H1 (cell line): ENCODE measurements at regions of chr3 and their contacts with region 1.

Region 1: GRCh38 chr3:49411968-49412631 is at the starts of genes RHOA and TCTA:
- DNase-seq: peak; percentile 93 to 95
- H3K4me3 ChIP-seq: peak within 1 kb of the TSS; percentile 76 to 99 (median 90)
- H3K27ac ChIP-seq: peak within 1 kb of the TSS; percentile 86
- H3K4me1 ChIP-seq: peaks cover 3 to 11% (median 8%) of the 10 kb centered on the region in 4 experiments; a peak in 6 of 7 replicates
- H3K27me3 ChIP-seq: no peaks in the 10 kb centered on the region
- CTCF ChIP-seq: 0 out of 4 replicates have a peak, but pooled peaks of 1 of the 3 experiments have one; percentile 8
- EP300 ChIP-seq: no peak
- POLR2A ChIP-seq: peak; percentile 95 to 99
- RAD21 ChIP-seq: no peak; a peak in 1 of 4 replicates
- total RNA-seq, gene RHOA: 386 and 397 TPM in 2 replicates
- total RNA-seq, gene TCTA: 6.2 and 7.4 TPM in 2 replicates

Region 2: GRCh38 chr3:49339945-49340800 is 71.9 kb before region 1 on chr3 and contains the start of gene USP4:
- CTCF ChIA-PET with region 1: interaction called, 6 read pairs
- POLR2A ChIA-PET with region 1: interaction called, 10 read pairs
- DNase-seq: peak; percentile 43 to 81
- H3K4me3 ChIP-seq: peak within 1 kb of the TSS; percentile 59 to 75 (median 74)
- H3K27ac ChIP-seq: peak within 1 kb of the TSS; percentile 70; the same call in 1 of the 2 replicates
- H3K4me1 ChIP-seq: peaks cover 0 to 11% (median 5%) of the 10 kb centered on the region in 4 experiments; a peak in 4 of 7 replicates
- H3K27me3 ChIP-seq: no peaks in the 10 kb centered on the region; a peak in 1 of 7 replicates
- CTCF ChIP-seq: peak; percentile 42 to 71 (median 47)
- EP300 ChIP-seq: no peak
- POLR2A ChIP-seq: peak; percentile 39 to 44; a peak in 2 of 3 replicates
- RAD21 ChIP-seq: peak; percentile 53 to 63
- total RNA-seq, gene USP4: 27.8 and 28.3 TPM in 2 replicates

Region 3: GRCh38 chr3:49399461-49399860 is 12.6 kb before region 1 on chr3:
- CTCF ChIA-PET with region 1: no interaction called
- POLR2A ChIA-PET with region 1: interaction called, 16 read pairs
- DNase-seq: no peak
- H3K4me3 ChIP-seq: no peak overlapping the region
- H3K27ac ChIP-seq: no peak overlapping the region
- H3K4me1 ChIP-seq: no peaks in the 10 kb centered on the region
- H3K27me3 ChIP-seq: no peaks in the 10 kb centered on the region
- CTCF ChIP-seq: no peak
- EP300 ChIP-seq: no peak
- POLR2A ChIP-seq: no peak
- RAD21 ChIP-seq: no peak

Region 4: DNA sequence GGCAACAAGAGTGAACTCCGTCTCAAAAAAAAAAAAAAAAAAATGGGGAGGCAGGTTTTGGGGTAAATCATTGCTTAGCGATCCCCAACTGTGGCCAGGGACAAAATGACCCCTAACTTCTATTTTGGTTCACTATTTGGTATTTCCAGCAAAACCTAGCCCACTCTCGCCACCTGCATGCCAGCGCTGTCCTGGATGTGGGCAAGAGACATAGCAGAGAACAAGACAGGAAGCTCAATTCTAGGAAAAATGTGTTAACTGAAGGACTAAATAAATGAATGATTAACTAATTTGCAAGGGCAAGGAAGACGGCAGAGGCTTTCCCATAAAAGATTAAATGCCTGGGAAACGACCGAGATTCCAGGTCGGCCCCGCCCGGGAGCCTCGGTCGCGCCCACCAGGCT is 16.6 kb after region 1 on chr3:
- CTCF ChIA-PET with region 1: interaction called, 16 read pairs
- POLR2A ChIA-PET with region 1: interaction called, 57 read pairs
- DNase-seq: no peak
- H3K4me3 ChIP-seq: peak overlapping the region; percentile 52 to 84 (median 77)
- H3K27ac ChIP-seq: no peak overlapping the region
- H3K4me1 ChIP-seq: no peaks in the 10 kb centered on the region; a peak in 1 of 7 replicates
- H3K27me3 ChIP-seq: no peaks in the 10 kb centered on the region
- CTCF ChIP-seq: no peak
- EP300 ChIP-seq: no peak
- POLR2A ChIP-seq: no peak
- RAD21 ChIP-seq: no peak; a peak in 1 of 4 replicates

Region 5: GRCh38 chr3:49461443-49462171 is 49.5 kb after region 1 on chr3:
- CTCF ChIA-PET with region 1: interaction called, 13 read pairs
- POLR2A ChIA-PET with region 1: interaction called, 19 read pairs
- DNase-seq: peak; percentile 67 to 70
- H3K4me3 ChIP-seq: peak overlapping the region in 3 of 4 experiments; percentile 15 to 34 (median 24); a peak in 6 of 8 replicates
- H3K27ac ChIP-seq: peak overlapping the region; percentile 89
- H3K4me1 ChIP-seq: peaks cover 16 to 34% (median 30%) of the 10 kb centered on the region in 4 experiments
- H3K27me3 ChIP-seq: no peaks in the 10 kb centered on the region
- CTCF ChIP-seq: peak in 1 of 3 experiments; percentile 13; a peak in 1 of 4 replicates
- EP300 ChIP-seq: peak in 1 of 2 experiments; percentile 27; a peak in 1 of 3 replicates
- POLR2A ChIP-seq: peak in 1 of 2 experiments; percentile 14; a peak in 1 of 3 replicates
- RAD21 ChIP-seq: peak; percentile 7 to 12; a peak in 2 of 4 replicates

Region 6: DNA sequence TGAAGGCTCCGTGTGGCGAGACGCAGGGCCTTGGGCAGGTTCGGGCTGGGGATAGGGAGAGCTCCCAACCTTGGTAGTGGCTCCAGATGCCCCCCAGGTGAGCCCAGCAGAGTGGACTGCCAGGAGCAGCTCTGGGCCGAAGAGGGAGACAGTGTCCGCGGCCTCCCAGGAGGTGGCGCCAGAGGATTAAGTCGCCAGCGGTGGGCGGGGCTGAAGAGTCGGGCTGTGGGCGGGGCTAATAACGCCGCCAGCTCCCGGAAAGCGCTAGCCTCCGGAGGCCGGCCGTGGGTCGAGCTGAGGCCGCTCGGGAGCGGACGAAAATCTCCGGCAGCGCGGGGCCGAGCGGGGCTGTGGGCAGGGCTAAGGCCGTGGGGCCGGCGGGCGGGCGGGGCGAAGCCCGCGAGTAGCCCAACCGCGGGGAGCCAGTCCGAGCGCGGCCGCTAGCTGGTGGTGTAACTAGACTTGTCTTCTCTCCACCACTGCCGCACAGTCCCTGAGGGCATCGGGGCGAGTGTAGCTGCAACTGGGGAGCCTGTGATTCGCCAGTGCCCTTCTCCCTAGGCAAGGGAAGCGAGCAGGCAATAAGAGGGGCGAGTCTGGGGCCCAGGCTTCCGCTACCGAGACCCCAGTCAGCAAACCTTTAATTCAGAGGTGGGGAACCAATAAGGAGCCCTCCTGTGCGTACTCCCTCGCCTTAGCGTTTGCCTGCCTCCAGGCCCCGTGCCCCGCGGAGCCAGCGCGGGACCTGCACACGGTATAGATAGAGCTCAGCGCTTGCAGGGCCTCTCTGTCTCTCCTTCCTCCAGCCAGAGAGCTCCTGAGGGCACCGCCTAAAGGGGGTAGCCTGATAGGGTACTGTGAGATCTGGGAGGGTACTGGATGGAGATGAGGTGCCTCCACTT is 127.8 kb after region 1 on chr3:
- CTCF ChIA-PET with region 1: interaction called, 14 read pairs
- POLR2A ChIA-PET with region 1: interaction called, 4 read pairs
- DNase-seq: peak; percentile 87 to 99
- H3K4me3 ChIP-seq: peak overlapping the region; percentile 26 to 71 (median 60)
- H3K27ac ChIP-seq: no peak overlapping the region
- H3K4me1 ChIP-seq: peaks cover 0 to 21% (median 3%) of the 10 kb centered on the region in 4 experiments; a peak in 6 of 7 replicates
- H3K27me3 ChIP-seq: no peaks in the 10 kb centered on the region
- CTCF ChIP-seq: peak in 2 of 3 experiments; percentile 88 to 96; a peak in 3 of 4 replicates
- EP300 ChIP-seq: no peak
- POLR2A ChIP-seq: peak in 1 of 2 experiments; percentile 64; a peak in 2 of 3 replicates
- RAD21 ChIP-seq: peak; percentile 96